ENCODE measurements at regions of chr3 and their contacts with region 1.

Region 1: GRCh38 chr3:127172781-127173515 is 20.0 kb upstream of the PRR23E start:
- DNase-seq: no peak
- ATAC-seq: no peak

Region 2: DNA sequence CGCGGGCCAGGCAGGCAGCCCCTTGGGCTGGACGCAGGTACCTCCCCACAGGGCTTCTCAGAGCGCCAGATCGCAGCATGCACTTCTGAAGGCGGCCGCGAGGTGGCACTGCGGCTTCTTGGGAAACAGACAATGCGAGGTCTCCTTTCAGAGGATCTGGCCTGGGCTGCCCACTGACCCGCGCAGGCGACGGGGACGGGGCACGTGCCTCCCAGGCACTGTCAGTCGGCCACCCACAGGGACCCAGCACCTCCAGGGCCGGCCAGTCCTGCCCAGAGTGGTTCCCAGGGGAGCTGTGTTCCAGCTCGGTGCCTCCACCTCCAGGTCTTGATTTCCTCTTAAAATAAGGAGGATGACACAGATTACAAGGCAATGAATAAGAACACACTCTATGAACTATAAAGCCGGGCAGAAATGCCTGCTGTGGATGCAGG is 493.6 kb before region 1 on chr3:
- intact Hi-C with region 1: loop called (anchors 10 kb)
- DNase-seq: peak; percentile 90
- ATAC-seq: peak; percentile 95